ENCODE measurements at regions of chr20 and their contacts with region 1.

Region 1: DNA sequence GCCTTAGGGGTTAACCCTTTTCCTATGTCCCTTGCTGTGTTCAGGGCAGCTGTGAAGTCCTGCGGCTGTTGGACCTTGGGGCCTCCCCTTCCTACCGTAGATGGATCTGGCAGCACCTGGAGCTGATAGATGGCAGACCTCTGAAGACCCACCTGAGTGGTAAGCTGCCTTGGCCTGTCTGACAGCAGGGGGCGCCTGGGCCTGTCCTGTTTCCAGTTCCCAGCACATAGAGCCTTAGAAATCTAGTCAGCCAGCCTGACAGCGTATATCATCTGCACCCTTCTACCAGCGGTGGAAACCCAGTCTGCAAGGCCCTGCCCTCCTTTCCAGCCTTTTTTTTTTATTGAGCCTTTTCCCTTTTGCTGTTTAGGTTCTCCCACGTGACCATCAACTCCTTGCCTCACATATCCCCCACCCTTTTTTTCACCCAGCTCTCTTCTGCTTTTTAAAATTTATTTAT is 26.6 kb downstream of the CNBD2 start:
- DNase-seq: peak; percentile 85
- H3K4me3 Mint-ChIP-seq: no peak overlapping the region
- H3K27ac Mint-ChIP-seq: no peak overlapping the region
- H3K4me1 Mint-ChIP-seq: peaks cover 7% of the 10 kb centered on the region
- H3K27me3 Mint-ChIP-seq: peaks cover under 1% of the 10 kb centered on the region
- CTCF ChIP-seq: peak; percentile 86

Region 2: GRCh38 chr20:36010825-36011224 is 15.8 kb after region 1 on chr20:
- CTCF ChIA-PET with region 1: interaction called, 32 read pairs
- POLR2A ChIA-PET with region 1: interaction called, 5 read pairs
- intact Hi-C with region 1: no loop called
- DNase-seq: no peak
- H3K4me3 Mint-ChIP-seq: no peak overlapping the region
- H3K27ac Mint-ChIP-seq: no peak overlapping the region
- H3K4me1 Mint-ChIP-seq: no peaks in the 10 kb centered on the region
- H3K27me3 Mint-ChIP-seq: no peaks in the 10 kb centered on the region
- CTCF ChIP-seq: no peak

Region 3: DNA sequence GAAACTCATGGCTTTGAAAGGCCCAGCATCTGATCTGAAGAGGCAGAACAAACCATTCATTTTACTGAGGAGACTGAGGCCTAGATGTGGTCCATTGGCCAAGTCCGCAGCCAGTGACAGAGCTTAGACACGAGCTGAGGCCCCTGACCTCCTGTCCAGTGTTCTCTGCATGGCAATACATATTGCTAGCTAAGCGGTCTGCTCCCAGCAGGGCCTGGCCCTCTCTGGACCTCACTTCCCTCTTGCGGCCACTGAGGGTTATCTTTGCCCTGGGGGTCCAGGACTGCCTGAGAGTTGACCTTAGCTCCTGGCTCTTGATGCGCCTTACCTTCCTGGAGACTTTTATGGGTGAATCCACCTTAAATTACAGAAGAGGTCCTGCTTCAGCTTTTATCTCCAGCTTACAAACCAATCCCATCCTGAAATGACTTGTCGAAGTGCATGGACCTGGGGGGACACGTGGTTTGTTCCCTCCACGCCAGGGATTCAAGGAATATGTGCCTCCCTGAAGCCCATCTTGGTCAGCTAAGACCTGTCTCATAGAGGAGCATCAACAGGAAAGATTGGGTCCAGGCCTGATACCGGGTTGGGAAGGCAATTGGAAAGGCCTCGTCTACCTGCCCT is 49.0 kb after region 1 on chr20:
- CTCF ChIA-PET with region 1: interaction called, 11 read pairs
- POLR2A ChIA-PET with region 1: no interaction called
- intact Hi-C with region 1: loop called (anchors 5 kb)
- DNase-seq: no peak
- H3K4me3 Mint-ChIP-seq: no peak overlapping the region
- H3K27ac Mint-ChIP-seq: no peak overlapping the region
- H3K4me1 Mint-ChIP-seq: peaks cover 14% of the 10 kb centered on the region
- H3K27me3 Mint-ChIP-seq: no peaks in the 10 kb centered on the region
- CTCF ChIP-seq: no peak

Region 4: GRCh38 chr20:36093025-36093803 is 98.2 kb after region 1 on chr20:
- CTCF ChIA-PET with region 1: interaction called, 66 read pairs
- POLR2A ChIA-PET with region 1: interaction called, 5 read pairs
- intact Hi-C with region 1: no loop called
- DNase-seq: peak; percentile 15
- H3K4me3 Mint-ChIP-seq: peak overlapping the region; percentile 90
- H3K27ac Mint-ChIP-seq: no peak overlapping the region
- H3K4me1 Mint-ChIP-seq: peaks cover 33% of the 10 kb centered on the region
- H3K27me3 Mint-ChIP-seq: no peaks in the 10 kb centered on the region
- CTCF ChIP-seq: no peak

Region 5: GRCh38 chr20:36128463-36129159 is 133.6 kb after region 1 on chr20:
- CTCF ChIA-PET with region 1: interaction called, 705 read pairs
- POLR2A ChIA-PET with region 1: interaction called, 3 read pairs
- intact Hi-C with region 1: no loop called
- DNase-seq: peak; percentile 51
- H3K4me3 Mint-ChIP-seq: no peak overlapping the region
- H3K27ac Mint-ChIP-seq: no peak overlapping the region
- H3K4me1 Mint-ChIP-seq: peaks cover 4% of the 10 kb centered on the region
- H3K27me3 Mint-ChIP-seq: no peaks in the 10 kb centered on the region
- CTCF ChIP-seq: no peak

Region 6: GRCh38 chr20:36199345-36200257 is 204.6 kb after region 1 on chr20:
- CTCF ChIA-PET with region 1: interaction called, 84 read pairs
- POLR2A ChIA-PET with region 1: interaction called, 3 read pairs
- intact Hi-C with region 1: loop called (anchors 1 kb)
- DNase-seq: peak; percentile 78
- H3K4me3 Mint-ChIP-seq: no peak overlapping the region
- H3K27ac Mint-ChIP-seq: no peak overlapping the region
- H3K4me1 Mint-ChIP-seq: no peaks in the 10 kb centered on the region
- H3K27me3 Mint-ChIP-seq: no peaks in the 10 kb centered on the region
- CTCF ChIP-seq: peak; percentile 84

Region 7: GRCh38 chr20:36285746-36286447 is 290.9 kb after region 1 on chr20:
- CTCF ChIA-PET with region 1: no interaction called
- POLR2A ChIA-PET with region 1: no interaction called
- intact Hi-C with region 1: no loop called
- DNase-seq: no peak
- H3K4me3 Mint-ChIP-seq: no peak overlapping the region
- H3K27ac Mint-ChIP-seq: no peak overlapping the region
- H3K4me1 Mint-ChIP-seq: no peaks in the 10 kb centered on the region
- H3K27me3 Mint-ChIP-seq: peaks cover 92% of the 10 kb centered on the region
- CTCF ChIP-seq: no peak

Measured in MCF 10A (cell line).